A549 (cell line): ENCODE measurements at regions of chr7 and their contacts with region 1.

Region 1: DNA sequence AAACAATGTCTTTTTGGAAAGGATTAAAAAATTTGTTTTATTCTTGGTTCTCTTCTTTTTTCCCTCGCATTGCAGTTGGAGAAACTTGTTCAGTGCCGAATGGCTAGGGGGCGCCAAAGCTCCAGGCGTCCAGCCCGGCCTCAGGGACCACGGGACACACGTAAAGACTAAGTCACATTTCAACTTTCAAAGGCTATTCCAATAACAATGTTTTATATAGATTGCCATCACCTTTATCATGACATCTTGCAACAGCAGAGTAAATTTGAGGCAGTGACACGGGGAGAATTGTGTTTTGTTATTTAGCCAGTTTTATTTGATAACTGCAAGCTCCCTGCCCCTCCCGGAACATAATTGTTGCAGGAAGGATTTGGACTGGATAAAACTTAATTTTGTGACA is 2.2 kb upstream of the IGFBP3 start:
- DNase-seq: peak in 1 of 2 experiments; percentile 81
- ATAC-seq: peak in 1 of 2 experiments; percentile 64; a peak in 3 of 6 replicates
- H3K4me3 ChIP-seq: peak overlapping the region; percentile 66; the same call in 2 of the 3 replicates
- H3K27ac ChIP-seq: peak overlapping the region; percentile 77 to 92
- H3K4me1 ChIP-seq: peaks cover 49% of the 10 kb centered on the region
- CTCF ChIP-seq: peak; percentile 95
- EP300 ChIP-seq: no peak
- POLR2A ChIP-seq: no peak
- RAD21 ChIP-seq: peak; percentile 99

Region 2: GRCh38 chr7:45962861-45963260 is 39.6 kb after region 1 on chr7:
- CTCF ChIA-PET with region 1: interaction called, 35 read pairs
- POLR2A ChIA-PET with region 1: no interaction called
- DNase-seq: no peak
- ATAC-seq: no peak
- H3K4me3 ChIP-seq: no peak overlapping the region
- H3K27ac ChIP-seq: peak overlapping the region in 1 of 2 experiments; percentile 34; a peak in 1 of 6 replicates
- H3K4me1 ChIP-seq: no peaks in the 10 kb centered on the region
- CTCF ChIP-seq: no peak
- EP300 ChIP-seq: no peak
- POLR2A ChIP-seq: no peak
- RAD21 ChIP-seq: no peak

Region 3: DNA sequence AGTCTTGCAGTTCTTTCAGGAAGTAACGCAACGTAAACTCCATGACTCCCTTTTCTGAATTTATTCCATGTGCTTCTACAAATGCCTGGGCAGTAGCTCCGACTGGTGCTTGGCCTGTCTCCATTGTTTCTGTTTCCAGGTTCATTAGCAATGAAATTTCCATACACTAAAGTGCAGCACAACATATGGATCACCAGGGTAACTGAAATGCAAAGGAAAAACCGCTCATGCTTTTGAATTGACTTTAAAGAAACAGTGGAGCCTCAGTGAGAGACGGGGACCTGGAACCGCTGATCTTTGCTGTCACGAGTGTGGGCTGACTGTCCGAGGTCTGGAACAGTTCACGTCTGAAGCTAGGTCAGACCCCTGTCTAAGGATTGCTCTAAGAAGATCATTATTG is 124.3 kb after region 1 on chr7:
- CTCF ChIA-PET with region 1: interaction called, 10 read pairs
- POLR2A ChIA-PET with region 1: no interaction called
- DNase-seq: no peak
- ATAC-seq: no peak
- H3K4me3 ChIP-seq: no peak overlapping the region
- H3K27ac ChIP-seq: no peak overlapping the region
- H3K4me1 ChIP-seq: no peaks in the 10 kb centered on the region
- CTCF ChIP-seq: no peak
- EP300 ChIP-seq: no peak
- POLR2A ChIP-seq: no peak
- RAD21 ChIP-seq: no peak

Region 4: DNA sequence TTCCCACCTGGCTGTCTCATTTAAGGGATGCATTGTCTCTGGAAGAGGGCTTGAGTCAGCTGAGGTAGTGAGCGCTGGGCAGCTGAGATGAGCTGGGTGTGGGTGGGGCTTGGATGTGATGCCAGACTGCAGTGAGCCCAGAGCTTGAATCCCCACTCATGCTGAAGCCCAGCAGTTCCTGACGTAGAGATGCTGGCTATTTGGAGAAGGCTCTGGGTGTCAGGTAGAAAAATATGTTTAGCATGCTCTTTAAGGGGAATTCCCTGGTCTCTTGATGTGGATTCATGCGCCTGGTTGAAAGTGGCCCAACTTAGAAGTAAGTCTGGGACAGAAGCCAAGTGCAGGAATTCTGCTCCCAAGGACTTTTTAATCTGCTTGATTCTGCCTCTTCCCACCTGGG is 239.3 kb after region 1 on chr7:
- CTCF ChIA-PET with region 1: interaction called, 15 read pairs
- POLR2A ChIA-PET with region 1: no interaction called
- DNase-seq: no peak
- ATAC-seq: no peak; a peak in 1 of 6 replicates
- H3K4me3 ChIP-seq: no peak overlapping the region
- H3K27ac ChIP-seq: peak overlapping the region in 1 of 2 experiments; percentile 31; a peak in 1 of 6 replicates
- H3K4me1 ChIP-seq: peaks cover 18% of the 10 kb centered on the region
- CTCF ChIP-seq: no peak
- EP300 ChIP-seq: no peak
- POLR2A ChIP-seq: no peak
- RAD21 ChIP-seq: no peak

Region 5: DNA sequence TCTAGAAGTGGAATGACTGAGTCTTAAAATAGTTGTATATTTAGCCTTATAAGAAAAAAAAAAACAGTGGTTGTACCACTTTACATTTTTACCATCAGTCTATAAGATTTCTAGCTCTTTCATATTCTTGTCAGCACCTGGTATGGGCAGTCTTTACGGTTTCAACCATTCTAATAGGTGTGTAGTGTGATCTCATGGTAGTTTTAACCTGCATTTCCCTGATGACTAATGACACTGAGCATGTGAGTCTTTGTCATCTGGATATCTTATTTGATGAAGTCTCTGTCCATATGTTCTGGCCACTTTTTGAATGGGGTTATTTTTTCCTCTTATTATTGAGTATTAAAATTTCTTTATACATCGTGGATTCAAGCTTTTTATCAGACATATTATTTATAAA is 363.1 kb after region 1 on chr7:
- CTCF ChIA-PET with region 1: interaction called, 17 read pairs
- POLR2A ChIA-PET with region 1: no interaction called
- DNase-seq: no peak
- ATAC-seq: no peak
- H3K4me3 ChIP-seq: no peak overlapping the region
- H3K27ac ChIP-seq: no peak overlapping the region
- H3K4me1 ChIP-seq: peaks cover 19% of the 10 kb centered on the region
- CTCF ChIP-seq: no peak
- EP300 ChIP-seq: no peak
- POLR2A ChIP-seq: no peak
- RAD21 ChIP-seq: no peak